ENCODE measurements at regions of chr2 and their contacts with region 1.

Region 1: GRCh38 chr2:127479219-127479825 is 47.0 kb downstream of the IWS1 start:
- DNase-seq: peak; percentile 48
- H3K4me3 Mint-ChIP-seq: no peak overlapping the region
- H3K27ac Mint-ChIP-seq: no peak overlapping the region
- H3K4me1 Mint-ChIP-seq: no peaks in the 10 kb centered on the region
- H3K27me3 Mint-ChIP-seq: no peaks in the 10 kb centered on the region
- CTCF ChIP-seq: peak; percentile 50

Region 2: DNA sequence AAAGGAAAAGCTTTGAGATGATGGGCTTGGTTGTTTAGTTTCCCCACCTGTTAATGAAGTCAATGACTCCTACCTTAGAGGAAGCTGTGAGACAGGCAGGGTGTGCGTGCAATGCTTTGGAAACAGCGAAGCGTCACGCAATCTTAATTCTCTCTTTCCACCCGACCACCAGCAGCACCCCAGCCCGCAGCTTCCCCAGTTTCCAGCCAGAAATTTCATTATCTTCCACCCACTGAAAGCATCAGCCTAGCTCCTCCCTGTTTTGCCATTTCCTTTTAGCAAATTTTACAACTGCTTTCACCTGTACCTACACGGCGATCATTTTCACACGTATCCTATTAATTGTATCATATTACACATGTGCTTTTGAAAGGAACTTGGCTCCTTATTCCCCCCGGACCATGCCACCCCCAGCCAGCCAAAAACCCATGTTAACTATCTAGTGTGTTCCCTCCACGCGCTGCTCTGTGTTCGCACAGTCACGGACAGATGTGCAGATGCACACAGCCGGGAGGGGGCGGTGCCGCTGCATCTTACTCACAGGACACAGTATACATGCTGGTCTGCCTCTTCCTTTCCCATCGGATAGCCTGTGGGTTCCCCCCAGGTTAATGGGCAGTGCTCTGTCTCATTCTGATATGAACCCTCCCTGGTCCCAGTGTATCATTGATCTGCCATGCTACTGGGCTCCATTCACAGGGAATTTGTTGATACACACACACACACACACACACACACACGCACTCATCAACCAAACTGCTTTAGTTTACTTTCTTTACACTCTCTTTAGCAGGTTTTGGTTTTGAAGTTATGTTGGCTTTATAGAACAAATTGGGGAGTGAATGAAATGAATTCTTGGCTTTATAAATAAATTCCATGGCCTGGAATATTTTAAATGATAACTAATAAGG is 281.6 kb before region 1 on chr2:
- CTCF ChIA-PET with region 1: interaction called, 8 read pairs
- POLR2A ChIA-PET with region 1: no interaction called
- intact Hi-C with region 1: loop called (anchors 1 kb)
- DNase-seq: peak; percentile 77
- H3K4me3 Mint-ChIP-seq: peak overlapping the region; percentile 9
- H3K27ac Mint-ChIP-seq: no peak overlapping the region
- H3K4me1 Mint-ChIP-seq: peaks cover 6% of the 10 kb centered on the region
- H3K27me3 Mint-ChIP-seq: no peaks in the 10 kb centered on the region
- CTCF ChIP-seq: peak; percentile 77

Region 3: GRCh38 chr2:127355386-127356008 is 123.8 kb before region 1 on chr2:
- CTCF ChIA-PET with region 1: interaction called, 4 read pairs
- POLR2A ChIA-PET with region 1: interaction called, 3 read pairs
- intact Hi-C with region 1: loop called (anchors 1 kb)
- DNase-seq: peak; percentile 50
- H3K4me3 Mint-ChIP-seq: no peak overlapping the region
- H3K27ac Mint-ChIP-seq: no peak overlapping the region
- H3K4me1 Mint-ChIP-seq: peaks cover 16% of the 10 kb centered on the region
- H3K27me3 Mint-ChIP-seq: no peaks in the 10 kb centered on the region
- CTCF ChIP-seq: peak; percentile 70

Region 4: GRCh38 chr2:127464470-127465257 is 14.7 kb before region 1 on chr2:
- CTCF ChIA-PET with region 1: interaction called, 22 read pairs
- POLR2A ChIA-PET with region 1: no interaction called
- intact Hi-C with region 1: no loop called
- DNase-seq: no peak
- H3K4me3 Mint-ChIP-seq: no peak overlapping the region
- H3K27ac Mint-ChIP-seq: no peak overlapping the region
- H3K4me1 Mint-ChIP-seq: no peaks in the 10 kb centered on the region
- H3K27me3 Mint-ChIP-seq: no peaks in the 10 kb centered on the region
- CTCF ChIP-seq: no peak

Region 5: DNA sequence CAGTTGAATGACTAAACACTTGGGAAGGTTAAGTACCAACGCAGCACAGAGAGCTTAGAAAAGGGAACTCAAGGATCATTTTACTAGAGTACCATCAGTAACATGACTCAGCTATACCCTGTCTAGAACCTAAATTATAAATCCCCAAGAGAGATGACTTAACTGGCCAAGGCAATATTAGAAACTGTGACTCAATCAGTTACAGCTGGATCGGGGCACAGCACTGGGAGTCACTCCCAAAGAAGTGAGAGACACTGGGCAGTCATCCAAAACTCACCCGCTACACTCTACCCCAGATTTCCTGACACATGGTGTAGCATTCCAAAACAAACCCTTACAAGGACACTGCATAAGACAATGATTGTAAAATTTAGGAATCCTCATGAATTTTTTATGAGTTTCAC is 29.3 kb after region 1 on chr2:
- CTCF ChIA-PET with region 1: interaction called, 11 read pairs
- POLR2A ChIA-PET with region 1: interaction called, 3 read pairs
- intact Hi-C with region 1: no loop called
- DNase-seq: peak; percentile 98
- H3K4me3 Mint-ChIP-seq: no peak overlapping the region
- H3K27ac Mint-ChIP-seq: peak overlapping the region; percentile 32
- H3K4me1 Mint-ChIP-seq: peaks cover 23% of the 10 kb centered on the region
- H3K27me3 Mint-ChIP-seq: no peaks in the 10 kb centered on the region
- CTCF ChIP-seq: no peak

Measured in MCF 10A (cell line).